ENCODE measurements at regions of chr1 and their contacts with region 1.

Region 1: DNA sequence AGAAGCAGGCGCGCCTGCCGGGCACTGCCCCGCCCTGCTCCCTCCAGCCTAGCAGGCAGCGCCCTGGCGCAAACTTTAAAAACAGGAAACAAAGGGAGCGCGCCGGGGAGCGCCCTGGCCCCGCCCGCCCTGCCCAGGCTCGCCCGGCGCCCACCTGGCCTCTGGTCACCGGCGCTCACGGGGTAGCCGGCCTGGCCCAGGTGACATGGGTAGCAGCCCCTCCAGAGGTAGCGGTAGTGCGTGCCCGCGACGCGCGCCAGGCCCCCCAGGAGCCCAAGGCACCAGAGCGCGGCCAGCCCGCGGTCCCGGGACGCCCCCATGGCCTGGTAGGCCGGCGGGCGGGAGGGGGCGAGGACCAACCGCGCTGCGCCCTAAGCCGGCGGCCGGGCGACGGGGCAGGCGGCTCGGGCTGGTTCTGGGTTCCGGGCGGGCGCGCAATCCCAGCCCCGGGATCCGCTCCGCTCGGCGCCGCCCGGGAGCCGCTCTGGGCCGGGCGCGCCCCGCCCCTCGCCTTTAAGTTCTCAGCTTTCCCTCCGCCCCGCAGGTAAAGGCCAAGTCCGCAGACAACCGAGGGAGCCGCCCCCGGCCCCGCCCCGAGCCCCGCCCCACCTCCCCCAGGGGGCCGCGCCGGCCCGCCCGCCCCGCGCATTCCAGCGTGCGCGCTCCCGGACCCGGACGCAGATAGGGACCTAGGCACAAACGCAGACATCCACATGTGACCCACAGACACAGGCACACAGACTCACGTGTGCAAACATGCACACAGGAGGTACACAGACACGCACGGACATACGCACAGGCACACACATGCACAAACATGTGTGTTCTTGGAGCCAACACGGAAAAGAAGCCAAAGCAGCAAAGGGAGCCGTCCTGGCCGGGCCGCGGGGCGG is 76.7 kb downstream of the ARHGEF16 start:
- DNase-seq: peak; percentile 87
- H3K4me3 Mint-ChIP-seq: peak overlapping the region; percentile 74
- H3K27ac Mint-ChIP-seq: peak overlapping the region; percentile 47
- H3K4me1 Mint-ChIP-seq: peaks cover 12% of the 10 kb centered on the region
- H3K27me3 Mint-ChIP-seq: no peaks in the 10 kb centered on the region
- CTCF ChIP-seq: no peak

Region 2: GRCh38 chr1:3518256-3518655 is 12.9 kb before region 1 on chr1:
- CTCF ChIA-PET with region 1: interaction called, 27 read pairs
- POLR2A ChIA-PET with region 1: interaction called, 3 read pairs
- intact Hi-C with region 1: no loop called
- DNase-seq: no peak
- H3K4me3 Mint-ChIP-seq: no peak overlapping the region
- H3K27ac Mint-ChIP-seq: no peak overlapping the region
- H3K4me1 Mint-ChIP-seq: no peaks in the 10 kb centered on the region
- H3K27me3 Mint-ChIP-seq: no peaks in the 10 kb centered on the region
- CTCF ChIP-seq: peak; percentile 87

Measured in MCF 10A (cell line).